ENCODE measurements at regions of chr10 and their contacts with region 1.

Region 1: DNA sequence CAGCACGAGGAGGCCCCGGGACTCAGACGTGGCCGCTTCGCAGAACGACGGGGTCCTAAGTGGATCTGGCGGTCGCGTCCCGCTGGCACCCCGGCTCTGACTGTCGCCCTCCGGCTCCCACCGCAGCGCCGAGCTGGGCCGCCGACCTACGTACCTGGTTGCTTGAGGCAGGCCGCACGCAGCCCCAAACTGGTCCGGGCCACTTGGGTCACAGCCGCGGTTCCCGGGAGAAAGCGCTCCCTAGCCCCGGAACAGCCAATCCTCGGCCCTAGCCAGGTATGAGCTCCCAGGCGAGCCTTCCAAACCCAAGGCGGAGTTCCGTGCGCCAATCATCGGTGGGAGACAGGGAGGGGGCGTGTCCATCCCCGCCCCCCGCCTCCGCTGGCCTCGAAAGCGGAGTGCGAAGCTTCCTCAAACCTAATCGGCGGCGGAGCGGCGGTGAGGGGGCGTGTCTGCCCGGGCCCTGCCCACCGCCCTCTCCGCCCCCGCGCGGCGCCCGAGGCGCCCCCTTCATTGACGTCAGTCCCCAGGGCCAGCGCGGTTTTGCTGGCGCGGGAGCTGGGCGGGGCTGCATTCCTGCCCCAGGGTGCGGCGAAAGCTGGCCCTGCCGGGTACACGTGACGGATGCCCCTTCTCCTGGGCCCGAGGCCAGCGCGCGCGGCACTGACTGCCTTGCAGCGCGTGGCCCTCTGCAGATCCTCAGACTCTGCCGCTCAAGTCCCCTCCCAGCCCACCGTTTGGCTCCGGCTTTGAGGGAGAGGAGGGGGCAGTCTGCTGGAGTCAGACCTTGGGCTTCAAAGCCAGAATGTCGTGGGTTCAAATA is at the start of gene AVPI1:
- DNase-seq: peak; percentile 98 to 100
- H3K4me3 ChIP-seq: peak within 1 kb of the TSS; percentile 89
- H3K4me3 Mint-ChIP-seq: peak within 1 kb of the TSS; percentile 71
- H3K27ac Mint-ChIP-seq: peak within 1 kb of the TSS; percentile 97
- H3K4me1 ChIP-seq: peaks cover 41% of the 10 kb centered on the region
- H3K4me1 Mint-ChIP-seq: peaks cover 18% of the 10 kb centered on the region
- H3K27me3 ChIP-seq: no peaks in the 10 kb centered on the region
- H3K27me3 Mint-ChIP-seq: no peaks in the 10 kb centered on the region
- CTCF ChIP-seq: no peak
- total RNA-seq, gene AVPI1: 16.1 and 17.1 TPM in 2 replicates

Region 2: GRCh38 chr10:97640174-97640867 is 46.9 kb before region 1 on chr10 and contains the start of gene PI4K2A:
- CTCF ChIA-PET with region 1: interaction called, 3 read pairs
- POLR2A ChIA-PET with region 1: interaction called, 29 read pairs
- intact Hi-C with region 1: loop called (anchors 1 kb)
- DNase-seq: peak; percentile 99
- H3K4me3 ChIP-seq: peak within 1 kb of the TSS; percentile 82
- H3K4me3 Mint-ChIP-seq: peak within 1 kb of the TSS; percentile 99
- H3K27ac Mint-ChIP-seq: peak within 1 kb of the TSS; percentile 94
- H3K4me1 ChIP-seq: peaks cover 6% of the 10 kb centered on the region; the same call in 1 of the 2 replicates
- H3K4me1 Mint-ChIP-seq: peaks cover 12% of the 10 kb centered on the region
- H3K27me3 ChIP-seq: no peaks in the 10 kb centered on the region
- H3K27me3 Mint-ChIP-seq: no peaks in the 10 kb centered on the region
- CTCF ChIP-seq: no peak
- total RNA-seq, gene PI4K2A: 26.1 and 27.3 TPM in 2 replicates

Region 3: DNA sequence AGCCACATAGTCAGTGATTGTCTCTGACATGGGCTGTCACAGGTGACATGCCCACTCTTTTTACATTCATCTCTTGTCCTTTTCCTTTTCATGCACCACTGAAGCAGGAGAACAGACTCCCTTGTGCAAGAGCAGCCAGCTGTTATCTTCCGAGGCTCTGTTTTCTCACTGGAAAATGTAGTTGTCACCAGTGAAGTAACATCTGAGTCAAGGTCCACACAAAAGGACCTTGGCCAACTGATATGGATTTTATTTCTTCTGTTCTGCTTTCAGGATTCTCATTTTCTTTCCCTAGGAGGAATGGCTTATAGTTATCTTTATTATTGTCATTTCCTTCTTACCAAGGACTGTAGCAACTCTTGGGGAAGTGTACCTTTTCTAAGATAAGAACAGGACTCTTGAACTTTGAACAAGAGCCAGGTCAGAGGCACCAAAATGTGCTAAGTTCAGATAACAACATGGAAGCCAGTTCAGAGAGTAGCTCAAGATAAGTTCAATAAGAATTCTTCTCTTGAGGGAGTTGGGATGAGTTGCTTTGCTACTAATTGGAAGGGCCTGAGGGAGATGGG is 22.8 kb before region 1 on chr10:
- CTCF ChIA-PET with region 1: no interaction called
- POLR2A ChIA-PET with region 1: interaction called, 18 read pairs
- intact Hi-C with region 1: loop called (anchors 1 kb)
- DNase-seq: peak; percentile 67 to 76
- H3K4me3 ChIP-seq: no peak overlapping the region
- H3K4me3 Mint-ChIP-seq: peak overlapping the region; percentile 7
- H3K27ac Mint-ChIP-seq: peak overlapping the region; percentile 17
- H3K4me1 ChIP-seq: peaks cover 46% of the 10 kb centered on the region
- H3K4me1 Mint-ChIP-seq: peaks cover 20% of the 10 kb centered on the region
- H3K27me3 ChIP-seq: no peaks in the 10 kb centered on the region
- H3K27me3 Mint-ChIP-seq: no peaks in the 10 kb centered on the region
- CTCF ChIP-seq: no peak

Region 4: DNA sequence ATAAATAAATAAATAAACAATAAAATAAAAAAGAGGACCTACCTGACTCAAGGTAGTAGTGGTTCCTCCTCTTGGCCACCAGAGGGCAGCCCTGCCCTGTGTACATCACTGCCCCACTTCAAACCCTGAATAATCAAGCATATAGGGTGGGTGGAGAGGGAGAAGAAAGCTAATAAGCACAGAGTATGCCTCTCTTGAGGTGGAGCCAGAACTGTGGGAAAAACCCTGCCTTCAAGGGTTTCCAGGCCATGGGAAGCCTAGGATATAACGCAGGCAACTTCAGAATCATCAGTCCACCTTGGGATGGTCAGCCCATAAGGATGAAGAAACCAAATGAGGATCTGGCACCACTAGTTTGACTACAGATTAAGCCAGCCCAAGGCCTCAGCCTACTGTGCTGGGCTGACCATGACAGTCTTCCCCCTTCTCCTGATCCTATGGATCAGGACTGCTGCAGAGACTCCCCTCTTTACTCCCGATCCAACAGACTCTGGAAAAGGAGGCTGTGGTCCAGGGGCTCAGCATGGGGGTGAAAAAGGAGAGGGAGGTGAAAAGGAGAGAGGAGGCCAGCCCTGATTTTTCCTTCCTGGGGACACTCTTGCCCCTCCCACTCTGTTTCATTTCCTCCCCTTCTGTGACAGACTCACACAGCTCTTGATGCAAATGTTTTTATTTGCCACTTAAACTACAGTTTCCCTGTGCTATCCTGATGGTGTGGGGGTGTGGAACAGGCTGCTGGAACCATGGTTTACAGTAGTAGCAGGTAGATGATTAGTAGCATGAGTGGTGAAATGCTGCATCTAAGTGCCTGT is 10.2 kb before region 1 on chr10:
- CTCF ChIA-PET with region 1: interaction called, 20 read pairs
- POLR2A ChIA-PET with region 1: interaction called, 9 read pairs
- intact Hi-C with region 1: no loop called
- DNase-seq: peak in 1 of 2 experiments; percentile 54
- H3K4me3 ChIP-seq: no peak overlapping the region
- H3K4me3 Mint-ChIP-seq: no peak overlapping the region
- H3K27ac Mint-ChIP-seq: peak overlapping the region; percentile 57
- H3K4me1 ChIP-seq: peaks cover 5% of the 10 kb centered on the region
- H3K4me1 Mint-ChIP-seq: peaks cover 2% of the 10 kb centered on the region
- H3K27me3 ChIP-seq: no peaks in the 10 kb centered on the region
- H3K27me3 Mint-ChIP-seq: no peaks in the 10 kb centered on the region
- CTCF ChIP-seq: peak; percentile 82 to 87

Region 5: DNA sequence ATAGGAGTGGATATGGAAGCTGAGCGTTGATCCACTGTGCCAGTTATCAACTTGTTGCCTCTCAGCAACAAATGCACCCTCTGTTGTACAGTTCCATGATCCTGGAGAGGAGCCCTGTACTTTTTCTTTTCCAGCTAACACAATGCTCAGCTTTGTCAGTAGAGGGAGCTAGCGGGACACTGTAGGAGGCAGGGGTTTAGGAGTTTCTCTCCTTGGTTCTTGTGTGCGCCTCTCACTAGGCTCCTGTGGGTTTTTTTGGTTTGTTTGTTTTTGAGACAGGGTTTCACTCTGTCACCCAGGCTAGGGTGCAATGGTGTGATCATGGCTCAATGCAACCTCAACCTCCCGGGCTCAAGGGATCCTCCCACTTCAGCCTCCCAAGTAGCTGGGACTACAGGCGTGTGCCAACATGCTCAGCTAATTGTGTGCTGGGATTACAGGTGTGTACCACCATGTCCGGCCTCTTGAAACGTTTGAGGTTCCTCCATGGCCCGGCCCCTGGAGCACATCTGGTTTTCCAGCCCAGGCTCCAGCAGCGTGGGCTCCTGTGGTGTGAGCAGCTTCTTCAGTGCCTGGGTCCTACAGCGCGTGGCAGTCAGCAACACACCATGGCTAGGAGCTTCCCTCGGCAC is 14.4 kb after region 1 on chr10:
- CTCF ChIA-PET with region 1: interaction called, 18 read pairs
- POLR2A ChIA-PET with region 1: interaction called, 12 read pairs
- intact Hi-C with region 1: no loop called
- DNase-seq: peak; percentile 63 to 77
- H3K4me3 ChIP-seq: no peak overlapping the region
- H3K4me3 Mint-ChIP-seq: no peak overlapping the region
- H3K27ac Mint-ChIP-seq: no peak overlapping the region
- H3K4me1 ChIP-seq: peaks cover 3% of the 10 kb centered on the region; the same call in 1 of the 2 replicates
- H3K4me1 Mint-ChIP-seq: no peaks in the 10 kb centered on the region
- H3K27me3 ChIP-seq: no peaks in the 10 kb centered on the region
- H3K27me3 Mint-ChIP-seq: no peaks in the 10 kb centered on the region
- CTCF ChIP-seq: peak; percentile 78 to 95

Region 6: GRCh38 chr10:97714048-97714371 is 26.8 kb after region 1 on chr10:
- CTCF ChIA-PET with region 1: interaction called, 13 read pairs
- POLR2A ChIA-PET with region 1: interaction called, 20 read pairs
- intact Hi-C with region 1: loop called (anchors 5 kb)
- DNase-seq: peak; percentile 74 to 81
- H3K4me3 ChIP-seq: peak overlapping the region; percentile 89
- H3K4me3 Mint-ChIP-seq: peak overlapping the region; percentile 92
- H3K27ac Mint-ChIP-seq: peak overlapping the region; percentile 91
- H3K4me1 ChIP-seq: peaks cover 21% of the 10 kb centered on the region
- H3K4me1 Mint-ChIP-seq: peaks cover 19% of the 10 kb centered on the region
- H3K27me3 ChIP-seq: no peaks in the 10 kb centered on the region
- H3K27me3 Mint-ChIP-seq: no peaks in the 10 kb centered on the region
- CTCF ChIP-seq: peak in 1 of 2 experiments; percentile 49

Region 7: DNA sequence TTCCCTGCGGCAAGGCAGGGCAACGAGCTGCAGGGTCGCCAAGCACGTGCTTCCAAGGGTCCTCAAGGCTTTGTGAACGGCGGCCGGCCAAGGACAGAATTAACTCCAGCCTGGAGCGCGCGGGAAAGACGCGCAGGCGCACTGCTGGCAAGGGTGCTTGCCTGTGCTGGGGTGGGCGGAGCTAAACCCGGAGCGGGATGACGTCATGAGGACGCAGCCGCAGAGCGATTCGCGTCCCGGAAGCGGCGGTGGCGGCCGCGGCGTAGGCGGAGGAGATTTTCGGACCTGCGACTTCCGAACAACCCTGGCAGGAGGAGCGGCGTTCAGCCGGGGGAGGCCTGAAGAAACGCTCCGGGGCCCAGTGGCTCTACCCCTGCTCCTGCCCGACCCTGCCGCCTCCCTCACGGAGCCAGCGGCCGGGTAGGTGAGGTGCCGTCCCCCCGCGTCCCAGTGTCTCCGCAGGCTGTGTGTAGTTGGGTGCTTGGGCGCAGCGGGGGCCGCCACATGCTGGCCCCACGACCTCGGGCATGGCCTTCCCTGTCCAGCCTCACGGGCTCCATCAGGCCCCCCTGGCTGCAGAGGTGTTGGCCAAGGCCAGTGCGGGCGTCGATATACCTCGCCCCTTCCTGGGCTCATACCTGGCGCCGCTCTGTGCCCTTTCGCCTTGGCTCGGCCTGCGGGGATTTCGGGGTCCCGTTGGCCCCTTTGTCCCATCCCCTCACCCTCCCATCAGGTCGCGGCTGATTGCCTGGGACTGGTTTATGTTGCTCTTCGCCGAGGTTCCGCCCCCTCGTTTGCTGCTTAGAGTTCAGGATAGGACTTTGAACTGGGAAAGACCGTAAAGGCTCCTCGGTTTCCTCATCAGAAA is 50.0 kb after region 1 on chr10 and contains the start of gene ZFYVE27:
- CTCF ChIA-PET with region 1: interaction called, 17 read pairs
- POLR2A ChIA-PET with region 1: interaction called, 36 read pairs
- intact Hi-C with region 1: loop called (anchors 1 kb)
- DNase-seq: peak; percentile 97 to 98
- H3K4me3 ChIP-seq: peak within 1 kb of the TSS; percentile 77
- H3K4me3 Mint-ChIP-seq: peak within 1 kb of the TSS; percentile 83
- H3K27ac Mint-ChIP-seq: peak within 1 kb of the TSS; percentile 84
- H3K4me1 ChIP-seq: peaks cover 4% of the 10 kb centered on the region; the same call in 1 of the 2 replicates
- H3K4me1 Mint-ChIP-seq: peaks cover 21% of the 10 kb centered on the region
- H3K27me3 ChIP-seq: no peaks in the 10 kb centered on the region
- H3K27me3 Mint-ChIP-seq: no peaks in the 10 kb centered on the region
- CTCF ChIP-seq: no peak
- total RNA-seq, gene ZFYVE27: 41.3 and 41.6 TPM in 2 replicates

Region 8: GRCh38 chr10:97792141-97792721 is 105.1 kb after region 1 on chr10:
- CTCF ChIA-PET with region 1: no interaction called
- POLR2A ChIA-PET with region 1: no interaction called
- intact Hi-C with region 1: no loop called
- DNase-seq: peak; percentile 70 to 85
- H3K4me3 ChIP-seq: no peak overlapping the region
- H3K4me3 Mint-ChIP-seq: no peak overlapping the region
- H3K27ac Mint-ChIP-seq: no peak overlapping the region
- H3K4me1 ChIP-seq: peaks cover 40% of the 10 kb centered on the region
- H3K4me1 Mint-ChIP-seq: peaks cover 6% of the 10 kb centered on the region
- H3K27me3 ChIP-seq: no peaks in the 10 kb centered on the region
- H3K27me3 Mint-ChIP-seq: no peaks in the 10 kb centered on the region
- CTCF ChIP-seq: peak; percentile 95 to 96

Measured in Caco-2 (cell line).